Activated CD8-positive, alpha-beta T cell treated with anti-CD3 and anti-CD28 coated beads for 36 hours (primary cell): ENCODE measurements at regions of chr2 and their contacts with region 1.

Region 1: DNA sequence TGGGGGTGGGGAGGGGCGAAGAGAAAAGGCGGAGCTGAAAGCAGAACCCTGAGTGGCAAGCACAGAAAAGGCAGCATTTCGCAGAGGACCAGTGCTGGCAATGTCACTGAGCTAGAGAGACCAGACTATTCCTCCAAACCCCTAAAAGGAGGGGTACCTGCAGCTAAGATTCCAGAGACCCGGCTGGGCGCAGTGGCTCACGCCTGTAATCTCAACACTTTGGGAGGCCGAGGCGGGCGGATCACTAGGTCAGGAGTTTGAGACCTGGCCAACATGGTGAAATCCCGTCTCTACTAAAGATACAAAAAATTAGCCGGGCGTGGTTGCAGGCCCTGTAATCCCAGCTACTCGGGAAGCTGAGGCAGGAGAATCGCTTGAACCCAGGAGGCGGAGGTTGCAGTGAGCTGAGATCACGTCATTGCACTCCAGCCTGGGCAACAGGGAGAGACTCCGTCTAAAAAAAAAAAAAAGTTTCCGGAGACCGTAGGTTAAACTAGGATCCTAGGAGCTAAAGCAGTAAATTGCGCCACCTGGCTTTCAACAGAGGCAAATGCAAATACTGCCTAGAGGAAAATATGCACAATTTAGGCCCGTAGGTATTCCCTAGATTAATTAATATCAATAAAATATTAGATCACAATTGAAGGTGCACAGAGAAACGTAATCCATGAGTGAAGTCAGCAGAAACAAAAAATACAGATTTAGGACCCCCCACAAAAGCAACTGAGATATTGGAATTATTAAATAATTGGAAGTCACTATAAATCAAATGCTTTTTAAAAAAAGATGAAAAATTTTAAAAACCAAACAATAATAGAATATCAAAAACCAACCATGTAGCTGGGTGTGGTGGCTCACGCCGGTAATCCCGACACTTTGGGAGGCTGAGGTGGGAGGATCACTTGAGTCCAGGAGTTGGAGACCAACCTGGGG is 4.9 kb downstream of the UCN start:
- DNase-seq: peak; percentile 59
- ATAC-seq: peak; percentile 80
- H3K4me3 Mint-ChIP-seq: peak overlapping the region; percentile 61
- H3K27ac Mint-ChIP-seq: no peak overlapping the region
- H3K4me1 Mint-ChIP-seq: peaks cover 3% of the 10 kb centered on the region
- H3K27me3 Mint-ChIP-seq: peaks cover 18% of the 10 kb centered on the region
- CTCF ChIP-seq: peak; percentile 88

Region 2: GRCh38 chr2:27095745-27096651 is 207.4 kb before region 1 on chr2:
- CTCF ChIA-PET with region 1: interaction called, 12 read pairs
- POLR2A ChIA-PET with region 1: no interaction called
- intact Hi-C with region 1: no loop called
- DNase-seq: peak; percentile 65
- ATAC-seq: peak; percentile 94
- H3K4me3 Mint-ChIP-seq: peak overlapping the region; percentile 30
- H3K27ac Mint-ChIP-seq: no peak overlapping the region
- H3K4me1 Mint-ChIP-seq: no peaks in the 10 kb centered on the region
- H3K27me3 Mint-ChIP-seq: no peaks in the 10 kb centered on the region
- CTCF ChIP-seq: no peak

Region 3: GRCh38 chr2:27264753-27265535 is 38.4 kb before region 1 on chr2:
- CTCF ChIA-PET with region 1: interaction called, 38 read pairs
- POLR2A ChIA-PET with region 1: interaction called, 3 read pairs
- intact Hi-C with region 1: no loop called
- DNase-seq: peak; percentile 62
- ATAC-seq: peak; percentile 50
- H3K4me3 Mint-ChIP-seq: peak overlapping the region; percentile 65
- H3K27ac Mint-ChIP-seq: no peak overlapping the region
- H3K4me1 Mint-ChIP-seq: peaks cover 24% of the 10 kb centered on the region
- H3K27me3 Mint-ChIP-seq: peaks cover 38% of the 10 kb centered on the region
- CTCF ChIP-seq: no peak

Region 4: DNA sequence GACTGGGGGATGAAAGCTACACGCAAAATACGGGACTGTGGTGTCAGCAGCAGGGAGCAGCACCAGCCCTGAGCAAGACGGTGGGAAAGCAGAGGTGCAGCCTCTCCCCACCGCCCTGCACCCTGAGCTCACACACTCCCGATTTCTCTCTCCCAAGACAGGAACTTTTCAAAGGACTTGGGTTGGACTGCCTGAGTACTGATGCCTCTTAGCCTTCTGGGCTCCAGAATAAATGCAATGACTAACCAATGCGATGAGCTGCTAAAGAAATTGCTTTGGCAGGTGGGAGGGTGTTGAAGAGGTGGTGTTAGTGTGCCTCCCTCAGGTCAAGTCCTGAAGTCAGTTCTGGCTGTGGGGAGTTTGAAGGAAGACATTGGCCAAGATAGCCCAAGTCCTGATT is 11.5 kb before region 1 on chr2:
- CTCF ChIA-PET with region 1: interaction called, 49 read pairs
- POLR2A ChIA-PET with region 1: no interaction called
- intact Hi-C with region 1: no loop called
- DNase-seq: no peak
- ATAC-seq: no peak
- H3K4me3 Mint-ChIP-seq: no peak overlapping the region
- H3K27ac Mint-ChIP-seq: no peak overlapping the region
- H3K4me1 Mint-ChIP-seq: no peaks in the 10 kb centered on the region
- H3K27me3 Mint-ChIP-seq: peaks cover 15% of the 10 kb centered on the region
- CTCF ChIP-seq: no peak

Region 5: GRCh38 chr2:27322766-27323595 is 19.6 kb after region 1 on chr2 and contains the start of gene MPV17:
- CTCF ChIA-PET with region 1: interaction called, 20 read pairs
- POLR2A ChIA-PET with region 1: interaction called, 3 read pairs
- intact Hi-C with region 1: no loop called
- DNase-seq: peak; percentile 94
- ATAC-seq: peak; percentile 97
- H3K4me3 Mint-ChIP-seq: peak within 1 kb of the TSS; percentile 97
- H3K27ac Mint-ChIP-seq: peak within 1 kb of the TSS; percentile 97
- H3K4me1 Mint-ChIP-seq: peaks cover 21% of the 10 kb centered on the region
- H3K27me3 Mint-ChIP-seq: no peaks in the 10 kb centered on the region
- CTCF ChIP-seq: no peak
- total RNA-seq, gene MPV17: 72.3 to 85.1 TPM

Region 6: DNA sequence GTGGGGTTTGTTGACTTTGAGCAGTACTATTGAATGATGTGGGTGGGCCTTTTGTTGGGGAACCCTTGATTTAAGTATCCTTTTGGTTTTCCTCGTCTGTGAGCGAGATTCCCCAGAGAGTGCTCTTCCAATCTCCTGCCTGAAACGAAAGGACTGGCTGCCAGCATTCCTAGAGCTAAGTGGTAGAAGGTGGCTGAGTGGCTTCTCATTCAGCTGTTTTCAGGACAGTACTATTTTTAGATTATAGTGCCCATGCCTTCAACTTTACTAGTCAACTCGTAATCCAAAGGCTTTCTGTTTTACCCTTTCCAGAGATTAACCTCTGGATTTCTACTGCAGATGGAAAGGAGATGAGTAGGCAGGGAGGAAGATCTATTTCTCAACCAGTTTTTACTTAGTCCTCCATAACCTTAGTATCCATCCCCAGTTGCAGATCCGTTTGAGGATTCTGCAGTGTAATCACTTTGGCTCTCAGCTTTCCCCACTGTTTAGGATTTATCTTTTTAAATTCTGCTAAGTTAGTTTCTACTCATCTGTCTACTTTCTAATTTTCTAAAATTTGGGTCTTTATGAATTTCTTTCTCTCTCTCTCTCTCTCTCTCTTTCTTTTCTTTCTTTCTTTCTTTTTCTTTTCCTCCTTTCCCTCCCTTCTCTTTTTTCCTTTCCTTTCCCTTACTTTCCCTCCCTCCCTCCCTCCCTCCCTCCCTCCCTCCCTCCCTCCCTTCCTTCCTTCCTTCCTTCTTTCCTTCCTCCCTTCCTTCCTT is 369.5 kb after region 1 on chr2:
- CTCF ChIA-PET with region 1: no interaction called
- POLR2A ChIA-PET with region 1: no interaction called
- intact Hi-C with region 1: no loop called
- DNase-seq: no peak
- ATAC-seq: no peak
- H3K4me3 Mint-ChIP-seq: no peak overlapping the region
- H3K27ac Mint-ChIP-seq: peak overlapping the region; percentile 49
- H3K4me1 Mint-ChIP-seq: peaks cover 8% of the 10 kb centered on the region
- H3K27me3 Mint-ChIP-seq: no peaks in the 10 kb centered on the region
- CTCF ChIP-seq: no peak